T-cell (primary cell): ENCODE measurements at regions of chr10 and their contacts with region 1.

Region 1: GRCh38 chr10:8404391-8405120 is 350.1 kb downstream of the GATA3 start:
- DNase-seq: peak in 31 of 35 experiments; percentile 11 to 91 (median 43)
- ATAC-seq: peak; percentile 62 to 87 (median 70)
- H3K4me3 ChIP-seq: peak overlapping the region in 1 of 2 donors; percentile 14
- H3K4me3 Mint-ChIP-seq: peak overlapping the region; percentile 55 to 74 (median 68)
- H3K27ac ChIP-seq: peak overlapping the region; percentile 96
- H3K27ac Mint-ChIP-seq: peak overlapping the region; percentile 86 to 93
- H3K4me1 ChIP-seq: peaks cover 49 to 58% of the 10 kb centered on the region in 2 experiments
- H3K4me1 Mint-ChIP-seq: peaks cover 73 to 83% (median 79%) of the 10 kb centered on the region in 3 donors
- H3K27me3 ChIP-seq: no peaks in the 10 kb centered on the region
- H3K27me3 Mint-ChIP-seq: no peaks in the 10 kb centered on the region

Region 2: GRCh38 chr10:8416192-8416701 is 11.7 kb after region 1 on chr10:
- CTCF ChIA-PET with region 1: interaction called in 1 of 2 experiments, 7 read pairs
- POLR2A ChIA-PET with region 1: interaction called in 1 of 2 experiments, 11 read pairs
- DNase-seq: peak in 32 of 35 experiments; percentile 16 to 77 (median 51)
- ATAC-seq: peak; percentile 71 to 89 (median 76)
- H3K4me3 ChIP-seq: no peak overlapping the region
- H3K4me3 Mint-ChIP-seq: peak overlapping the region in 1 of 3 donors; percentile 40
- H3K27ac ChIP-seq: peak overlapping the region; percentile 94
- H3K27ac Mint-ChIP-seq: peak overlapping the region; percentile 90 to 94
- H3K4me1 ChIP-seq: peaks cover 6 to 17% of the 10 kb centered on the region in 2 experiments
- H3K4me1 Mint-ChIP-seq: peaks cover 28 to 40% (median 31%) of the 10 kb centered on the region in 3 donors
- H3K27me3 ChIP-seq: no peaks in the 10 kb centered on the region
- H3K27me3 Mint-ChIP-seq: no peaks in the 10 kb centered on the region